A549 (cell line): ENCODE measurements at regions of chr1 and their contacts with region 1.

Region 1: GRCh38 chr1:205591522-205592351 is 40.1 kb downstream of the ELK4 start:
- DNase-seq: peak; percentile 81 to 89
- ATAC-seq: peak; percentile 92
- H3K4me3 ChIP-seq: peak overlapping the region; percentile 37
- H3K27ac ChIP-seq: peak overlapping the region; percentile 64 to 72
- H3K4me1 ChIP-seq: peaks cover 3% of the 10 kb centered on the region; the same call in 1 of the 3 replicates
- CTCF ChIP-seq: peak; percentile 95
- EP300 ChIP-seq: no peak
- POLR2A ChIP-seq: no peak
- RAD21 ChIP-seq: peak; percentile 97 to 98

Region 2: GRCh38 chr1:205528887-205529825 is 62.6 kb before region 1 on chr1:
- CTCF ChIA-PET with region 1: interaction called, 19 read pairs
- POLR2A ChIA-PET with region 1: no interaction called
- DNase-seq: peak; percentile 66 to 88
- ATAC-seq: peak; percentile 78 to 93
- H3K4me3 ChIP-seq: peak overlapping the region; percentile 42
- H3K27ac ChIP-seq: peak overlapping the region; percentile 42 to 77; a peak in 4 of 6 replicates
- H3K4me1 ChIP-seq: 0 out of 3 replicates have a peak, but pooled peaks cover 3% of the 10 kb centered on the region
- CTCF ChIP-seq: peak; percentile 90
- EP300 ChIP-seq: no peak
- POLR2A ChIP-seq: no peak
- RAD21 ChIP-seq: peak; percentile 82 to 85

Region 3: GRCh38 chr1:205568469-205569361 is 23.0 kb before region 1 on chr1:
- CTCF ChIA-PET with region 1: interaction called, 31 read pairs
- POLR2A ChIA-PET with region 1: no interaction called
- DNase-seq: no peak
- ATAC-seq: peak; percentile 25 to 50; a peak in 3 of 6 replicates
- H3K4me3 ChIP-seq: peak overlapping the region; percentile 46
- H3K27ac ChIP-seq: peak overlapping the region in 1 of 2 experiments; percentile 56; a peak in 3 of 6 replicates
- H3K4me1 ChIP-seq: peaks cover 5% of the 10 kb centered on the region; the same call in 1 of the 3 replicates
- CTCF ChIP-seq: no peak
- EP300 ChIP-seq: no peak
- POLR2A ChIP-seq: no peak
- RAD21 ChIP-seq: no peak

Region 4: DNA sequence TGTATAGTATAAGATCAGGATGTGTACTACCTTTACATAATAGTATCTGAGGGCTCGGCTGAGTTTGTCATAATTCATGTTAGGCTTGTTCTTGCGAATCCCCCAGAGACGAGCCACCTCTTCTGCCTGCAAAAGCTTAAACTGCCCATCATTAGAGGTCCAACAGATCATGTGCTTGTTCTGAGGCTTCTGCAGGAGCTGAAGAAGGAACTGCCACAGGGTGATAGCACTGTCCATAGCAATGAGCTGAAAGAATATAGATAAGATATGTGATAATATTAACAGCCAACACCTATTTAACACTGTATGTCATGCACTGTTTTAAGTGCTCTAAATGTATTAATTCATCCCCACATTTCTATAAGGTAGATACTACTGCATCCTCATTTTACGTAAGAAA is 31.9 kb after region 1 on chr1:
- CTCF ChIA-PET with region 1: interaction called, 227 read pairs
- POLR2A ChIA-PET with region 1: no interaction called
- DNase-seq: no peak
- ATAC-seq: no peak
- H3K4me3 ChIP-seq: no peak overlapping the region
- H3K27ac ChIP-seq: no peak overlapping the region
- H3K4me1 ChIP-seq: peaks cover 9% of the 10 kb centered on the region; the same call in 1 of the 3 replicates
- CTCF ChIP-seq: no peak
- EP300 ChIP-seq: no peak
- POLR2A ChIP-seq: no peak
- RAD21 ChIP-seq: no peak

Region 5: DNA sequence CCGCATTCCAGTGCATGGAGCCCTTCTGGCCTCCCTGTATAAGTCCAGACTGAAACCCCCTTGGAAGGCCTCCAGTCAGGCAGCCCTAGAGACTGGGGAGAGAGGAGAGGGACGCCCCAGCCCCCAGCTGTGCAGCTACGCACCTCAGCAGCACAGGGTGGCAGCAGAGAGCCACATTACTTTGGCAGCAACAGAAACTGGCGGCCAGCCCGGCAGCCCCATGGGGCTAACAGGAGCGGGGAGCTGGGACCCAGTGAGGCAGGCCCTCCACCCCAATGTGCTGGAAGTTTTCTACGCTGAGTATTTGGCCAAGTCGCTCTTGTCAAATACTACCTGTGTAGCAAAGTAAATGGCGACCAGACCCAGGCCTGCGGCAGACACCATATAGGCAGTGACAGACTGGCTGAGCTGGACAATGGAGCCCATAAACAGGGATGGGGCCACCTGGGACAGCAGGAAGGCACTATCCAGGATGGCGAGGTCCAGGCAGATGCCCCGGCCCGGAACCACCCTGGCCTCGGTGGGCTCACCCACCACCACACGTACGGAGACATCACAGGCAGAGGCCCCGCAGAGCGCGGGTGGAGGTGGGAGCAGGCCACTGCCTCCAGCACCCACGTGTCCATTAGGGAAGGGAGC is 67.3 kb after region 1 on chr1:
- CTCF ChIA-PET with region 1: interaction called, 423 read pairs
- POLR2A ChIA-PET with region 1: interaction called, 8 read pairs
- DNase-seq: peak; percentile 56 to 87
- ATAC-seq: peak; percentile 85 to 94
- H3K4me3 ChIP-seq: no peak overlapping the region
- H3K27ac ChIP-seq: no peak overlapping the region
- H3K4me1 ChIP-seq: no peaks in the 10 kb centered on the region
- CTCF ChIP-seq: peak; percentile 79
- EP300 ChIP-seq: no peak
- POLR2A ChIP-seq: no peak
- RAD21 ChIP-seq: peak; percentile 83 to 88

Region 6: DNA sequence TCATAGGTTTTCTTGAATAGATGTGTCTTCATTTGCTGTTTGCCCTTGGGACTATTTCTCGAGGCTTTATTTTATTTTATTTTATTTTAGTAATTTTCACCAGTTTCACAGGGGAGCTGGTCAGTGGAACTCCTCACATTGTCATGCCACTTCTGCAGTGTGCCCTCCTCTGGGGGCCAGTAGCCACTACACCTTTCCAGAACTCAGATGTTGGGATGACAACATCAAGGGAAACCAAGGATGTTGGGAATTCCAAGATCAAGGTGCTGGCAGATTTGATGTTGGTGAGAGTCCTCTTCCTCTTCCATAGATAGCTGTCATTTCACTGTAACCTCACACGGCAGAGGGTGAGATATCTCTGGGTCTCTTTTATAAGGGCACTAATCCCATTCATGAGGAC is 316.1 kb after region 1 on chr1:
- CTCF ChIA-PET with region 1: no interaction called
- POLR2A ChIA-PET with region 1: interaction called, 10 read pairs
- DNase-seq: peak in 1 of 2 experiments; percentile 52
- ATAC-seq: peak; percentile 90 to 92; a peak in 5 of 6 replicates
- H3K4me3 ChIP-seq: no peak overlapping the region
- H3K27ac ChIP-seq: peak overlapping the region; percentile 26 to 57; a peak in 2 of 6 replicates
- H3K4me1 ChIP-seq: peaks cover 7% of the 10 kb centered on the region; the same call in 2 of the 3 replicates
- CTCF ChIP-seq: peak; percentile 68
- EP300 ChIP-seq: no peak
- POLR2A ChIP-seq: no peak
- RAD21 ChIP-seq: peak; percentile 63 to 77